BJ (cell line): ENCODE measurements at regions of chr2 and their contacts with region 1.

Region 1: DNA sequence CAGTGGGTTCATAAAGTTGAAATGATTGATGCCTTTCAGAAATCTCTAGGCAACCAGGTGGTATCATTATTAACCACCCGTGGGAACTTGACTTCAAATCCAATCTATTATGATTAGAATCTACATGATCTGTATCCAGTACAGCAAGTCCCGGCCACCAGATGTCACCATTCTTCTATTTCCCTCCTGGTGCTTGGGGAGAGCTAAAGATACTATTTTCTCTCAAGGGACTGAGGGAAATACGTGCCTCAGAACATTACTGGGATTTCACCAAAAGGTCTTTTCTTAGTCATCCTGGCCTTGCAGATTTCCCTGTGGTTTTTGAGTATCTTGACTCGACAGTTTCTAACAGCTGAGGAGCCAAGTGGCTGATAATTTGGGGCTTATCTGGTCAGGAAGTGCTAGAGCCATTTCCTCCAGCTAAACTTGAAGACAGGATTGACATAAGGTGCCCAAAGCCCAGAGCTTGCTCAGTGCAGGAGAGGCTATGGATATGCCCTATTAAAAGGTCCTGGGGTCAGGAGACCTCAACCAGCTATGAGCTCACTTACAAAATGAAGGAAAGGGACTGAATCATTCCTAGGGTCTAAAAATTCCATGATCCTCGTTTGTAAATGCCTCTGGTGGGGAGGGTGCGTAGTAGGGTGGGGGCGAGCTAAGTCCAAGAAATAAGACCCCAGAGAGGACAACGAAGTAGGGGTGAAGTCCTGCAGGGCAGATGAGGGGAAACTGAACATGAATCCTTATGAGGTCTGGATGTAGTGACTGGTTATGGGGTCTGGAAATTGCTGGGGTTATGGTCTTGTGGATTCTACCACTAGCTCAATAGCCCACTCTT is 135.4 kb upstream of the MGAT5 start:
- DNase-seq: peak; percentile 87
- H3K4me3 ChIP-seq: no peak overlapping the region
- H3K27me3 ChIP-seq: no peaks in the 10 kb centered on the region; the same call in 1 of the 2 replicates
- CTCF ChIP-seq: peak; percentile 77

Region 2: DNA sequence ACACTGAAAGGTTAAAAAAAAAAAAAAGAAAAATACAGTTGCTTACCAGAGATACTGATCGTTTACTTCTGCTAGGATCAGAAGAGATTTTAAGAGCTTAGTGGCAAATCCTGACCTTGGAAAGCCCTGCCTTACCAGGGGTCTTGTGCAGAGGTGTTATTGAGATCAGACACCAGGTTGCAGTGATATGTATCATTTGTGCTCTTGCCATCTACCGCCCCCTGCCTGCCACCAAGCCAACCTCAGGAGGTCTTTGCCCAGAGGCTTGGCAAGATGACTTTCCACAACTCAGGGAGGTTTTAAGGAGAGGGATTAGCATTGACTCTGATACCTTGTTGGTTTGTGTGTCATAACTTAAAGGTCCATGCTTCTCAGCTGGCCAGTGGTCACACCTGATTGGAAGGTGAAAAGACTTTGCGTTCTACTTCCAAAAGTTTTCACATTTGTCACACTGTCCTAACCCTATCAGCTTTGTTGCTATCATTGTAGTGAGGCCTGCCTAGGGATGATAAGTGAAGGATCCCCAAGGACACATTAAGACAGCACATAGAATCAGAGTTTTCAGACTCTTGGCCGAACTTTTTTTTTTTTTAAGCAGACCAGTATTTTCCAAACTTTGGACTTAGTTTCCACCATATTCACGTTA is 89.2 kb after region 1 on chr2:
- CTCF ChIA-PET with region 1: interaction called, 42 read pairs
- POLR2A ChIA-PET with region 1: no interaction called
- DNase-seq: no peak
- H3K4me3 ChIP-seq: no peak overlapping the region
- H3K27me3 ChIP-seq: no peaks in the 10 kb centered on the region
- CTCF ChIP-seq: peak; percentile 67

Region 3: GRCh38 chr2:134245340-134245984 is 127.0 kb after region 1 on chr2:
- CTCF ChIA-PET with region 1: interaction called, 77 read pairs
- POLR2A ChIA-PET with region 1: no interaction called
- DNase-seq: no peak
- H3K4me3 ChIP-seq: no peak overlapping the region
- H3K27me3 ChIP-seq: no peaks in the 10 kb centered on the region
- CTCF ChIP-seq: peak; percentile 87

Region 4: DNA sequence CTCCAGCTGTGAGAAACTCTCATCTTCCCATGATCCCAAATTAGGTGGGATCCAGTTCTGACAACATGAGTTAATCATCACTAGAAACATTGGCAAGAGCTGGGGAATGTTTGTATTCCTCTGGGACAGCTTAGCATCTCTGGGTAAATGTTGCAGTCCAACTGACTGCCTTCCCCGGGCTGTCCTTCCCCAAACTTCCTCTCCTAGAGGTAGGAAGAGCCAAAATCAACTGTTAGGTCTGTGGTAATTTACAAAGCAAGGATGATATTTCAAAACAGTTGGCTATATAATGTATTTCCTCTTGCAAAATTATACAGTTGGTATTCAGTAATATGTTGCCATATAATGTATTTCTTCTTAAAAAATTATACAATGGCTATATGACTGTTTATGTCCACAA is 283.9 kb after region 1 on chr2:
- CTCF ChIA-PET with region 1: interaction called, 10 read pairs
- POLR2A ChIA-PET with region 1: no interaction called
- DNase-seq: no peak
- H3K4me3 ChIP-seq: no peak overlapping the region
- H3K27me3 ChIP-seq: no peaks in the 10 kb centered on the region
- CTCF ChIP-seq: no peak

Region 5: GRCh38 chr2:134454931-134455330 is 336.4 kb after region 1 on chr2:
- CTCF ChIA-PET with region 1: interaction called, 49 read pairs
- POLR2A ChIA-PET with region 1: no interaction called
- DNase-seq: no peak
- H3K4me3 ChIP-seq: no peak overlapping the region
- H3K27me3 ChIP-seq: no peaks in the 10 kb centered on the region
- CTCF ChIP-seq: no peak